ENCODE measurements at regions of chr12 and their contacts with region 1.

Region 1: DNA sequence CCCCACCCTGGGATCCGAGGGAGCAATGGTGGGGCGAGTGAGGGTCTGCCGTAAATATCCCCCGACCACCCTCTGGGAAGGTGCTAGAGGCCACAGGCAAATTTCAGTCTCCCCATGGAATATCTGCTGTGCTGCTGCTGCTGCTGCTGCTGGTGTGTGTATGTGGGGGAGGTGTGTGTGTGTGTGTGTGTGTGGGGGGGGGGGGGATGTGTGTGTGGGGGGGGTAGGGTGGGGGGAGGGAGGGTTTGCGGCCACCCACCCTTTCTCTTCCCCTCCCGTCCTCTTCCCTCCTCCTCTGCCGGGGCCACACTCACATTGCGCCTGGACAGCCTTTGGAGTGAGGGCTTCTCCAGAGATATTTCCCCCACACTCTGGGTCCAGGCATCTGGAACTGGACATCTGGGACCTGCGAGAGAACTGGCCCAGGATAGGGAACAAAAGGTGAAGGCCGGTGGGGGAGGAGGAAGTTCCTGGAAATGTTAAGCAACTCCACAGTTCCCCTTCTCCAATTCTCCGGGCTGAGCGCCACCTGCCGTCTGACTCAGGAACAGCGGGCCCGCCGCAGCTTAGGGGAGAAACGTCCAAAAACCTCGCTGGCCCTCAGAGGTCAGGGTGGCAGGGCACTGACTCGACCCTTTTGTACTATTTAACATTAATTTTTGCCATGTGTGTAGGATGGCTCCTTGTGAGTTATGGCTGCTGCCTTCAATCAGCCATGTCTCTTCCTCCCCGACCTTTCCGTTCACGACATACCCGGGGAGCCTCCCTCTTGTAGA is at the start of gene C1RL:
- DNase-seq: peak; percentile 87
- ATAC-seq: peak; percentile 21
- H3K4me3 Mint-ChIP-seq: peak within 1 kb of the TSS; percentile 99
- H3K27ac Mint-ChIP-seq: peak within 1 kb of the TSS; percentile 97
- H3K4me1 Mint-ChIP-seq: peaks cover 52% of the 10 kb centered on the region
- H3K27me3 Mint-ChIP-seq: no peaks in the 10 kb centered on the region
- total RNA-seq, gene C1RL: 21.8 to 27.4 TPM

Region 2: DNA sequence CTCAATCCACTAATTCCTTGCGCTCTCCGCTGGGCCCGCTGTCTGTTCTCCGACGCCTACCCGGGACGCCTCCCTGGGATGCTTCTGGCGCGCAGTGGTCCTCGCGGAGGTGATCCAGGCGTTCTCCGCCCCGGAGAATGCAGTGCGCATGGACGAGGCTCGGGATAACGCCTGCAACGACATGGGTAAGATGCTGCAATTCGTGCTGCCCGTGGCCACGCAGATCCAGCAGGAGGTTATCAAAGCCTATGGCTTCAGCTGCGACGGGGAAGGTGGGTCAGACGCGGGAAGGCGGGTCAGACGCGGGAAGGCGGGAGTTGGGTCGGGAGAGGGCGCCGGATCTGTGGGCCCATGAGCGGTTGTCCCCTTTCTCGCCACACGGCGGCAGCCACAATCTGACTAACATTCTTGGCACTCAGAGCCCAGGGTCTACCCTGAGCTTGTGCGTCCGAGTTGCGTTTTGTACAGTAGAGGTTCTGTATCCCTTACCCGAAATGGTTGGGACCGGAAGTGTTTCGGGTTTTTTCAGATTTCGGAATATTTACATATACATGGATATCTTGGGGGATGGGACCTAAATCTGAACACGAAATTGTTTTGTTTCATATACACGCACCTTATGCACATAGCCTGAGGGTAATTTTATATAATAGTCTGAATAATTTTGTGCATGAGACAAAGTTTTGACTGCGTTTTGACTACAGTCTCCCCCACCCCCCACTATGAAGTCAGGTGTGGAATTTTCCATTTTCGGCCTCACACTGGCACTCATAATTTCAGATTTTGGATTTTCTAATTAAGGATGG is 164.4 kb before region 1 on chr12:
- CTCF ChIA-PET with region 1: interaction called, 51 read pairs
- DNase-seq: peak; percentile 95
- ATAC-seq: peak; percentile 50
- H3K4me3 Mint-ChIP-seq: peak overlapping the region; percentile 86
- H3K27ac Mint-ChIP-seq: peak overlapping the region; percentile 98
- H3K4me1 Mint-ChIP-seq: peaks cover 61% of the 10 kb centered on the region
- H3K27me3 Mint-ChIP-seq: peaks cover 4% of the 10 kb centered on the region

Region 3: DNA sequence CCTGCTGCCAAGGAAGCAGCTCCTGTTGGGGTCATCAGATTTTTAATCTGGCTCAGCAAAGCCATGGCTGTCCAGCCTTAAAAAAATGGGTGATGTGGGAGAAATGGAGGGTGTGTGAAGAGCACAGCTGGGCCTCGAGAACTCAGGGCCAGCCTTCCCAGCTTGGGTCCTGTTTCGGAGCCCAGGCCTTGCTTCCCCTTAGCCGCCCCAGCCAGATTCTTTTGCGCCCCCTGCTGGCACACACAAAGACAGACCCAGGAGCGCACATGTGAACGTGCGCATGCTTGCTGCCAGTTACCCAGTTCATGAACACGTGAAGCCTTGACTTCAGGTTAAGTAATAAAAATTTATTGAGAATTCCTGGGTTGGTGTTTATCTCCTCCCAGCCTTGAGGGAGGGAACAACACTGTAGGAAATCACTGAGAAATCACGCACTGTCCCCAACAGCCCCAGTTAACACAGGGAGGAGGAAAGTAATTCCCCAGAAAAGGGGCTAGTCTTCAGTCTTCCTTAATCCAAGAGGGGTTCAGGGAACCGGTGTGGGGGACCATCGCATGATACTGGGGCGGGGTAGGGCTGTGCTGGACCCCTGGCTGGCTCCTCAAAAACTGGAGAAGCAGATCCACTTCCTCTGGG is 143.8 kb before region 1 on chr12:
- CTCF ChIA-PET with region 1: interaction called, 14 read pairs
- DNase-seq: peak; percentile 91
- ATAC-seq: peak; percentile 58
- H3K4me3 Mint-ChIP-seq: no peak overlapping the region
- H3K27ac Mint-ChIP-seq: peak overlapping the region; percentile 82
- H3K4me1 Mint-ChIP-seq: peaks cover 61% of the 10 kb centered on the region
- H3K27me3 Mint-ChIP-seq: no peaks in the 10 kb centered on the region

Region 4: DNA sequence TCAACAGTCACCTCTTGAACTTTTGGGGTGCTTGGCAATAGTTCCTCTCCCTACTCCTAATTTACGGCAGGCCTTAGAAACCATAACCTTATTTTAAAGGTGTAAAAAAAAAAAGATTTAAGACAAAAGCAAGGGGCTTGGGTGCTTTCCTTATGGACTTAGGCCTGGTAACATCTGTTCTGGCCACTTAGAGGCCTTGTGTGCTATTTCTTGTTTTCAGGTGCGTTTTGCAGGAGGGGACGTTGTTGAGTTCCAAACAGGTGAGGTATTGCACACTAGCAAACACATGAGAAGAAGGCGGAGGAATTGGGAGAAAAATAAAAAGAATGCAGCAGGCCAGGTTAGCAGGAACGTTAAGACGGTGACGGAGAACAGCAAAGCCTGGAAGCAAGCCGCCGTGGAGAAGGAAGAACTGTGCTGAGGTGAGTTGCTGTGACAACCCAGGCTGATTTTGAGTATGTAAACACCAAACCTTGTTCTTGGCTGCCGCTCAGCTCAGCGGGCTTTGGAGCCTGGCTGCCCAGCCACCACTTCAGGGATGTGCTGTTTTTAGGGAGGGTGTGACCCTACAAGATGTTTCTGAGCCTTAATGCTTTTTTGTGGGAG is 120.9 kb before region 1 on chr12:
- CTCF ChIA-PET with region 1: no interaction called
- DNase-seq: no peak
- ATAC-seq: no peak
- H3K4me3 Mint-ChIP-seq: no peak overlapping the region
- H3K27ac Mint-ChIP-seq: no peak overlapping the region
- H3K4me1 Mint-ChIP-seq: no peaks in the 10 kb centered on the region
- H3K27me3 Mint-ChIP-seq: no peaks in the 10 kb centered on the region

Region 5: GRCh38 chr12:7018350-7019042 is 90.5 kb before region 1 on chr12 and contains the start of gene LPCAT3:
- CTCF ChIA-PET with region 1: interaction called, 31 read pairs
- DNase-seq: peak; percentile 98
- ATAC-seq: peak; percentile 95
- H3K4me3 Mint-ChIP-seq: peak within 1 kb of the TSS; percentile 93
- H3K27ac Mint-ChIP-seq: peak within 1 kb of the TSS; percentile 90
- H3K4me1 Mint-ChIP-seq: peaks cover 28% of the 10 kb centered on the region
- H3K27me3 Mint-ChIP-seq: no peaks in the 10 kb centered on the region
- total RNA-seq, gene LPCAT3: 29.3 to 32.0 TPM

Region 6: DNA sequence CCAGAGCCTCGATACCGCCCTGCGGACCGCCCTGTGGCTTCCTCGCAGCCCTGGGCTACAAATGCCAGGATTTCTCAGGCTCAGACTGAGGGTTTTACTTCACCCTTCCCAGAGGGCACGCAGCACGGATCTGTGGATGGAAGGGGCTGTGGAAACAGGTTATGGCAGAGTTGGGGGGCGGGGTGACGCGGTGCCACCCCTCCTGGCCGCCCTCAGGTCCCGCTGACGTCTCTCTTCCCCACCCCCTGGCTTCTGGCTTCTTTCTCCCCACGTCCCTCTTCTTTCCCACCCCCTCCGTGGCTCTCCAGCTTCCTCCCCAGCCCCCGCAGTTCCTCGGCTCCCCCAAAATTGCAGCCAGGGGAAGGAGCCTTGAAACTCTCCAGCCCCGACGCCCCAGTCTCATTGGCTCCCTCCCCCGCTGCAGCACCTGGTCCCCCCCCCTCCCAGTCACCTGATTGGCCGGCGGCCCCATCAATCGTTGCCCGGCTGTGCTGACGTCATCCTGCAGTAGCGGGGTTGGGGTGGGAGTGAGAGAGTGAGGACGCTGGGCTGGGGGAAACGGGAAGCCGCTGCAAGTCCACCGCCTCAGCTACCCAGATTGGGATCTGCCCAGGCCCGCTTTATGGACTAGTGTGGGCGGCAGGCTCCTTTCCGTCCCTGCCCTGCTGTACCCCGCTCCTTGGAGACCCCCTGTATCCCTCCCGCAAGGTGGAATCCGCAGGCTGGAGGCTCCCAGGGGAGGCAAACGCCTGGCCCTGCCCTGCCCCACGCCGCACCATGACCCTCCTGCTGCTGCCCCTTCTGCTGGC is 21.1 kb after region 1 on chr12 and contains the start of gene CLSTN3:
- CTCF ChIA-PET with region 1: interaction called, 10 read pairs
- DNase-seq: peak; percentile 92
- ATAC-seq: peak; percentile 83
- H3K4me3 Mint-ChIP-seq: peak within 1 kb of the TSS; percentile 95
- H3K27ac Mint-ChIP-seq: peak within 1 kb of the TSS; percentile 87
- H3K4me1 Mint-ChIP-seq: peaks cover 38% of the 10 kb centered on the region
- H3K27me3 Mint-ChIP-seq: no peaks in the 10 kb centered on the region
- total RNA-seq, gene CLSTN3: 71.9 to 109 TPM

Region 7: GRCh38 chr12:7155481-7156034 is 46.6 kb after region 1 on chr12:
- CTCF ChIA-PET with region 1: no interaction called
- DNase-seq: no peak
- ATAC-seq: no peak
- H3K4me3 Mint-ChIP-seq: no peak overlapping the region
- H3K27ac Mint-ChIP-seq: no peak overlapping the region
- H3K4me1 Mint-ChIP-seq: no peaks in the 10 kb centered on the region
- H3K27me3 Mint-ChIP-seq: no peaks in the 10 kb centered on the region

Region 8: GRCh38 chr12:7265243-7265642 is 156.3 kb after region 1 on chr12:
- CTCF ChIA-PET with region 1: no interaction called
- DNase-seq: no peak
- ATAC-seq: no peak
- H3K4me3 Mint-ChIP-seq: no peak overlapping the region
- H3K27ac Mint-ChIP-seq: no peak overlapping the region
- H3K4me1 Mint-ChIP-seq: no peaks in the 10 kb centered on the region
- H3K27me3 Mint-ChIP-seq: peaks cover 7% of the 10 kb centered on the region